GM12878 (cell line): ENCODE measurements at regions of chr6 and their contacts with region 1.

Region 1: DNA sequence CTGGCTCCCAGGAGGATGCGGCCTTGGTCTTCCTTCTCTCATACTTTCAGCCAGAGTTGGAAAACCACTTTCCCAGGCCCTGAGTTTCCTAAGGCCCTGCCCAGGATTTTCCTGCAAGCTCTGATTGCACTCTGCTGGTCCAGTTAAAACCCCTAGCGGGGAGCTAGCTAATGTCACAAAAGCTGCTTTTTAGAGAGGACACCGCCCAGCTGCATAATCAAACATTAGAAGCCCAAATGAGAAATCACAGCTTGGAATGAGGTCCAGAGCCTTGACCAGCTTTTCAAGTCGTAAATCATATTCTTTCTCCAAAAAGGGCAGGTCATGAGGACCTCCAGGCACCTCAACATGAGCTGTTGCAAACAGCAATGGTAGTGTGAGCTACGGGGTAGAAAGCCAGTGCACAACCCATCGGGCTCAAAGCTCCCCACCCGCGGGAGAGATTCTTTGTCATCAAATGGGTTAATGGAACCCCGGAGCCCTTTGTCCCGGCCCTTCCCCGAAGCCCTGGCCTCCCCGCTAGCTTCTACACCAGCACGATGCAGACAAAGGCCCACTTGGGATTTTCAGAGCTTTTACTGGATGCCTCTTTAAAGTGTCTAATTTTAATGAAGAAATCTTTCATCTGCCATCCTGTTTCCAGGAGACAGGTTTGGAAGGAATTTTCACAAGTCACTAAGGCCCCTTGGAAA is 134.0 kb downstream of the SCML4 start:
- DNase-seq: no peak
- ATAC-seq: no peak
- H3K4me3 ChIP-seq: no peak overlapping the region
- H3K27ac ChIP-seq: no peak overlapping the region
- H3K4me1 ChIP-seq: peaks cover 3% of the 10 kb centered on the region
- H3K27me3 ChIP-seq: no peaks in the 10 kb centered on the region
- CTCF ChIP-seq: no peak
- EP300 ChIP-seq: no peak
- POLR2A ChIP-seq: no peak
- RAD21 ChIP-seq: no peak

Region 2: DNA sequence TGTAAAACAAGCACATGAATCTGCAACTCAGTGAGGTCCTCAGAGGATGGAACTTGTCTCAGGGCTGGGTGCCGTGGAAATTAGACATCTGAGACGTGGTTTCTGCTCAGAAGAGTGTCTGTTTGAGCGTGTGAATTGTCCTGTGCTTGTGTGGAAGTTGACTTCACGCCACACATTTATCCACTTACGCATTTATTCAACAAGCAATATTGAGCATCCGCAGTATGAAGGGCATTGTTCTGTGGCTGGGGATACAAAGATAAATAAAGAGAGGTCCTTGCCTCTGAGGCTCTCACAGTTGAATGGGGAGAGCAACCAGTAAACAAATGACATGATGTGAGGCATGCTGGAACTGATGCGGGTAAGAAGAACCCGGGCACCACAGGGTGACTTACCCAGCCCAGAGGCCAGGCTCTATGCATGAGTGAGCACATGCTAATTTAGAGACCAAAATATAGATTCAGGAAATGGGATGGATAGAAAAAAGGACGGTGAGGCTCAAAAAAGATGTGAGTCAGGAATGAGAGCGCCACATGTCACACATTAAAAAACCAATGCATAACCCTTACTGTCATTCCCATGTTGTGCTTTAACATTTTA is 139.8 kb before region 1 on chr6:
- CTCF ChIA-PET with region 1: no interaction called
- POLR2A ChIA-PET with region 1: no interaction called
- RAD21 ChIA-PET with region 1: no interaction called
- SMC1A ChIA-PET with region 1: no interaction called
- in situ Hi-C with region 1: no loop called
- intact Hi-C with region 1: no loop called
- DNase-seq: peak; percentile 7
- ATAC-seq: peak; percentile 68
- H3K4me3 ChIP-seq: no peak overlapping the region
- H3K27ac ChIP-seq: no peak overlapping the region
- H3K4me1 ChIP-seq: peaks cover 3% of the 10 kb centered on the region; the same call in 1 of the 2 replicates
- H3K27me3 ChIP-seq: no peaks in the 10 kb centered on the region; a peak in 1 of 4 replicates
- CTCF ChIP-seq: no peak
- EP300 ChIP-seq: no peak
- POLR2A ChIP-seq: no peak
- RAD21 ChIP-seq: no peak

Region 3: DNA sequence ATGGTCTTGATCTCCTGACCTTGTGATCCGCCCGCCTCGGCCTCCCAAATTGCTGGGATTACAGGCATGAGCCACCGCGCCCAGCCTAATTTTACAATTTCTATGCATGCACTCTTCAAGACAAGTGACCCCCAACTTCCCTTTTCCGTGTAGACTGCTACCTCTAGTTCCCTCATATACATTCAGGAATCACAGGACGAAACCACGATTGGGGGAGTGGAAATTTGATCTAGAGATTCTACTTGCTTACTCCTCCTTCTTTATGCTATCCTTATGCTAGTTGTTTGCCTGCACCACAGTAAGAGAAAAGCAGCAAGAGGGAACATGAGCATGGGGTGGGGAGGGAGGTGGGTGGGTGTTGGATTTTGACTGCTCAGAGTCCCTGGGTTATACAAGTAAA is 349.6 kb after region 1 on chr6:
- CTCF ChIA-PET with region 1: no interaction called
- POLR2A ChIA-PET with region 1: no interaction called
- RAD21 ChIA-PET with region 1: no interaction called
- SMC1A ChIA-PET with region 1: no interaction called
- in situ Hi-C with region 1: loop called (anchors 10 kb)
- intact Hi-C with region 1: no loop called
- DNase-seq: no peak
- ATAC-seq: no peak
- H3K4me3 ChIP-seq: no peak overlapping the region
- H3K27ac ChIP-seq: no peak overlapping the region
- H3K4me1 ChIP-seq: no peaks in the 10 kb centered on the region
- H3K27me3 ChIP-seq: no peaks in the 10 kb centered on the region
- CTCF ChIP-seq: no peak
- EP300 ChIP-seq: no peak
- POLR2A ChIP-seq: no peak
- RAD21 ChIP-seq: no peak